ENCODE measurements at regions of chr19 and their contacts with region 1.

Region 1: DNA sequence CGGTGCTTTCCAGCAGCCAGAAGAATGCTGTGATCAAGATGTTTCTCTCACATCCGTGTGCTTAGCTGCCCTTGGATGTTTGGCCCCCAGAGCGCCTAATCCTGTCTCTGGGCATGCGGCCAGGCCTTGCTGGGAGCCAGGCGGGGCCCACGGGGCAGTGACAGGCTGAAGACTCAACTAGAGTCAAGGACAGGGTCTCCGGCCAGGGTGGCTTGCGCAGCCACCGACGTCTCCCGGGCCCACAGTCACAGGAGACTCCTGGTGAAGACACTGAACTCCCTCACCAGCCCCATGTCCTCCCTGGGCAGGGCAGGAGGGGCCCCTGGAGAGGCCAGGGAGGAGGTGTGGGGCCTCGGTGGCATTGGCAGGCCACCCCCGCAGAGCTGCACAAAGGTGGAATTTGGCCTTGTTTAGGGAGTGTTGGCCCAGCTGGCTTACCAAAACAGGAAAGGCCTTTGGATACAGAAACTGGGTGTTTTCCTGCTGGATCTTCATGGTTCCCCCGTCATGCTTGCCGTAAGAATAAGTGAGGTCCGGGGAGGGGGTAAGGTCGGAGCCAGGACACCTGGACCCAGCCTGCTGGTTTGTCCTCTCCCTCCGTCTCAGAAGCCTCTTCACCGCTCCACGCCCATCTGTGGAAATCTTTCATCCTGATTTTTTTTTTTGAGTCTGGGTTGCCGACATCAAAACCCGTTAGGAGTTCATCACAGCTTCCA is 10.0 kb upstream of the NDUFS7 start:
- DNase-seq: peak; percentile 88

Region 2: GRCh38 chr19:1275260-1275975 is 98.3 kb before region 1 on chr19 and contains the start of gene FAM174C:
- intact Hi-C with region 1: loop called (anchors 5 kb)
- DNase-seq: peak; percentile 96
- total RNA-seq, gene FAM174C: 20.0 TPM

Region 3: DNA sequence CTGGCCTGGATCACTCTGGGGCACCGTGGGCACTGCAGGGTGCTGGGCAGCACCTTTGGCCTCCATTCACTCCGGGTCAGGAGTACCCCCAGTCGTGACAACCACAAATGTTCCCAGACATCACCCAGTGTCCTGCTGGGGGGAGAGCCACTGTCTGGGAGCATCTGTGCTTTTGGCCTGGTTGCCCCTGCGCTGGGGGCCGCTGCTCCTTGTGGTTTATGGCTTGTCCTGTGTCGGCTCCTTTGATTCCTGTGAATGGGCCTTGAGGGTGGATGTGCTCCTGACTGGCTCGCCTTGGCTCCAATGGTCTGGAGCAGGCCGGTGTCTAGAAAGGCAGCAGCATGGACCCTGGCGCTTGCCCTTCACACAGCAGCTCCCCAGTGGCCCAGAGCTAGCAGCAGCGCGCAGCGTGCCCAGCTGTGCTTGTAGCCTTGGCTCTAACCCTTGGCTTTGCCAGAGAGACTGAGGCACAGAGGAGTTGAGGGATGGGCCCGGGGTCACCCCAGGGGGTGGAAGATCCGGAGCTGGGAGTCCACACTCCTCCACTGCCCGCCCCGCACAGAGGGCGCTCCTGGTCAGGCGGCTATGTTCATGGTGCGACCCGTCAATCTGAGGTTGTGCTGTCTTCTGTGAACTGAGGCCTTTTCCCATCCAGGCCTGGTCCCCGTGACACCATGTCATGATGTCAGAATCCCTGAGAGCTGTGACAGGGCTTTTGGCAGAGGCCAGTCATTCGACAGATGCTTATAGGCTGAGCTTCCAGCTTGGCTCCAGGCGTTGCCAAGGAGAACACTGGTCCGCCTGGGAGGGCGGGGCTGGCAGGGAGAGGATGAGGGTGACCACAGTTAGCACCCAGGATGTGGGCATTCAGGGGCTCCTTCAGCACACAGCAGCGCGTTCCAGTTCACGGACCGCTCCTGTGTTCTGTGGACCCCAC is 37.8 kb after region 1 on chr19:
- intact Hi-C with region 1: no loop called
- DNase-seq: peak; percentile 85

Measured in cardiac septum (tissue), 1 donor.